Activated CD4-positive, alpha-beta T cell treated with anti-CD3 and anti-CD28 coated beads for 36 hours (primary cell): ENCODE measurements at regions of chr1 and their contacts with region 1.

Region 1: DNA sequence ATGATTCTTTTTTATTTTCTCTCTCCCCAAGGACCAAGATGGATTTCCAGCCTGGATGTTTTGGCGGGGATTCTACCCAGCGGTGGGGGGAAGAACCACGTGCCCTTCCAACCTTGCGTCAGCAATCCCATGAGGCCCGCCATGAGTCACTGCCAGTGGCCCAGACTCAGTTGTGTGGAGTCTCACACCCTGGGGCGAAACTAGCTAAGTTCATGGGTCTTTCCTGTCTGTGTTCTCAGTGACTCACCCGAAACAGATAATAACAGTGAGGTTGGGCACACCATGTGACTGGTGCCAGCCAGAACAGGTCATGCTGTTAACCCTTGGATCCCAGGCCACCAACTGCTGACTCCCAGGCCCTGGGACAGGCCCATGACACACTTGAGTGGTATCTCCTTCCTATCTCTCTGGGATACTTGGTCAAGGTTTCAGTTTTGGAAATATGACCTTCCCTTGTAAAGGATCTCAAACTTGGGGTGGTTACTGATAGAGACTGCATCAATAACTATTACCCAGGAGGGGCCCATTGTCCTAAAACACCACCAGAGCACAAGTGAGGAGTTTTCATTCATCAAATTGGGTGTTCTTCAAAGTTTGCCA is 98.0 kb upstream of the DUSP10 start:
- DNase-seq: peak; percentile 85
- ATAC-seq: peak; percentile 98
- H3K4me3 Mint-ChIP-seq: no peak overlapping the region
- H3K27ac Mint-ChIP-seq: peak overlapping the region; percentile 85
- H3K4me1 Mint-ChIP-seq: peaks cover 38% of the 10 kb centered on the region
- H3K27me3 Mint-ChIP-seq: peaks cover 6% of the 10 kb centered on the region

Region 2: GRCh38 chr1:221878134-221878533 is 38.2 kb after region 1 on chr1:
- CTCF ChIA-PET with region 1: no interaction called
- POLR2A ChIA-PET with region 1: interaction called, 4 read pairs
- intact Hi-C with region 1: loop called in 1 of 2 experiments (anchors 2 kb)
- DNase-seq: no peak
- ATAC-seq: peak; percentile 87
- H3K4me3 Mint-ChIP-seq: no peak overlapping the region
- H3K27ac Mint-ChIP-seq: no peak overlapping the region
- H3K4me1 Mint-ChIP-seq: peaks cover 8% of the 10 kb centered on the region
- H3K27me3 Mint-ChIP-seq: peaks cover 10% of the 10 kb centered on the region